ENCODE measurements at regions of chr4 and their contacts with region 1.

Region 1: DNA sequence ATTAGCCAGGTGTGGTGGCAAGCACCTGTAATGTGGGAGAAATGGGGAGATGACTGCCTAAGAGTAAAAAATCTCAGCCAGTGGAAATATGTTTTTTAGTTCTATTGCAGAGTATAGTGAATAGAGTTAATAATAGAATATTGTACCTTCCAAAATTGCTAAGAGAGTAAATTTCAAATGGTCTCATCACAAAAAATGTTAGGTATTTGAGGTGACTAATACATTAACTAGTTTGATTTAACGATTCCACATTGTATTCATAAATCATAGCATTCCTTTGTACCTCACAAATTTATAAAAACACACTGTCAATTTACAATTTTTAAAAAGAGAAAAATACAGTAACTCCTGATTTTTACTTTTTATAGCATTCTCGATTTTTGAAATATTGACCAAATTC is 681.5 kb upstream of the EPHA5 start:
- DNase-seq: no peak
- H3K4me3 ChIP-seq: no peak overlapping the region
- H3K4me3 Mint-ChIP-seq: no peak overlapping the region
- H3K27ac Mint-ChIP-seq: no peak overlapping the region
- H3K4me1 ChIP-seq: no peaks in the 10 kb centered on the region
- H3K4me1 Mint-ChIP-seq: no peaks in the 10 kb centered on the region
- H3K27me3 ChIP-seq: no peaks in the 10 kb centered on the region
- H3K27me3 Mint-ChIP-seq: peaks cover 5% of the 10 kb centered on the region
- CTCF ChIP-seq: no peak

Region 2: DNA sequence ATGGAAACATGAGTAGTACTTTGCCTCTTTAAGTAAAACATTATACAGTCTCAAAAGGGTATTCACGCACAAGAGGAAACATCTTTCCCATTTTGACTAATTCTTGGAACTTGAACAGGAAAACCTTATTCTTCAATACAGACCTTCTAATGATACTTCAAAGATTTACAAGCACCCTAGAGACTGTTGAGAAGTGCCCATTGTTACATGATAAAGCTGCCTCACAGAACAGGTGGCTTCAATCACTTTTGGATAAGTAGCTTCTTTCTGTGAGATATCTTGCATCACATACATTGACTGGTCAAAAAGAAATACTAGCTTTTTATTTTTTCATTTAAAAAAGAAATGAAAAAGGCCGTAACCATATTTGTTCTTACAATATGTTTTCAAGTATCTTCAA is 900.9 kb before region 1 on chr4:
- CTCF ChIA-PET with region 1: no interaction called
- POLR2A ChIA-PET with region 1: no interaction called
- intact Hi-C with region 1: no loop called
- DNase-seq: no peak
- H3K4me3 ChIP-seq: no peak overlapping the region
- H3K4me3 Mint-ChIP-seq: no peak overlapping the region
- H3K27ac Mint-ChIP-seq: no peak overlapping the region
- H3K4me1 ChIP-seq: no peaks in the 10 kb centered on the region
- H3K4me1 Mint-ChIP-seq: no peaks in the 10 kb centered on the region
- H3K27me3 ChIP-seq: no peaks in the 10 kb centered on the region
- H3K27me3 Mint-ChIP-seq: no peaks in the 10 kb centered on the region
- CTCF ChIP-seq: no peak

Region 3: GRCh38 chr4:66475596-66475995 is 123.8 kb after region 1 on chr4:
- CTCF ChIA-PET with region 1: no interaction called
- POLR2A ChIA-PET with region 1: no interaction called
- intact Hi-C with region 1: no loop called
- DNase-seq: no peak
- H3K4me3 ChIP-seq: no peak overlapping the region
- H3K4me3 Mint-ChIP-seq: no peak overlapping the region
- H3K27ac Mint-ChIP-seq: no peak overlapping the region
- H3K4me1 ChIP-seq: no peaks in the 10 kb centered on the region
- H3K4me1 Mint-ChIP-seq: no peaks in the 10 kb centered on the region
- H3K27me3 ChIP-seq: no peaks in the 10 kb centered on the region
- H3K27me3 Mint-ChIP-seq: no peaks in the 10 kb centered on the region
- CTCF ChIP-seq: no peak

Region 4: GRCh38 chr4:66489783-66490452 is 138.2 kb after region 1 on chr4:
- CTCF ChIA-PET with region 1: no interaction called
- POLR2A ChIA-PET with region 1: no interaction called
- intact Hi-C with region 1: loop called (anchors 5 kb)
- DNase-seq: no peak
- H3K4me3 ChIP-seq: no peak overlapping the region
- H3K4me3 Mint-ChIP-seq: no peak overlapping the region
- H3K27ac Mint-ChIP-seq: no peak overlapping the region
- H3K4me1 ChIP-seq: no peaks in the 10 kb centered on the region
- H3K4me1 Mint-ChIP-seq: peaks cover 8% of the 10 kb centered on the region
- H3K27me3 ChIP-seq: no peaks in the 10 kb centered on the region
- H3K27me3 Mint-ChIP-seq: no peaks in the 10 kb centered on the region
- CTCF ChIP-seq: no peak

Measured in Caco-2 (cell line).